ENCODE measurements at regions of chr6 and their contacts with region 1.

Region 1: DNA sequence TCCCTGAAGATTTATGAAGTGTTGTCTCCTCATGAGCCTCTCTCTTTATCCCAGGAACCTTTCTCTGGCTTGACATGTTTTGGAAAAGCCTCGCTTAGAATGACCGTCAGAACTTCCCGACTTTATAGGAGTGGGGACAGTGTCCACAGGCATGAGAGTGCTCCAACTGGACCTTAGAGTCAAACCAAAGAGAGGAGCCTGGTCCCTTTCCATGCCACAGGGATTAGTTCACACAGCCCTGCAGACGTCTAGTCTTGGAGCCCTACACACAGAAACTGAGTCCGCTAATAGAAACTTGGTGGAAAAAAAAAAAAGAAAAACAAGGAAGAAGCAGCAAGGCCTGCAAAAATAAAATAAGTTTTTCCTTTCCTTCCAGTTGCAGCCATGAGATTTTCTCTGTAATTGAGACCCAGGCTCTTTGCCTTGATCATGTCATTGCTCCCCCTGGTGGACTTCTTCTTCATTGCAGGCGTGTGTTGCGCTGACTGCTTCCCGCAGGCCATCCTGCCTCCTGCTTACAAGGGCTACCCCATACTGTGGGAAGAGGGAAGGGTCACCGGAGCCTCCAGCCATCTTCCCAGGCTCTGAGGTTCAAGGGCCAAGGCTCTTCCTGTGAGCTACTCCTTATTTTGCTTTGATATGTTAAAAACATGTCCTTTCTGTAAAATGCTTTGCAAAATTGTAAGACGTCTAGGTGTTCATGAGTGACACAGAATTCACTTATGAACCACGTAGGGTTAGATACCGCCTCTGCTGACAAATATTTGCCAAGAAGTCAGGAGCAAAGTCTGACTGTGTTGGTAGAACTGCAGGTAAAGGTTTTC is 201.0 kb downstream of the UST start:
- DNase-seq: peak; percentile 54
- H3K4me3 Mint-ChIP-seq: no peak overlapping the region
- H3K27ac Mint-ChIP-seq: no peak overlapping the region
- H3K4me1 Mint-ChIP-seq: no peaks in the 10 kb centered on the region
- H3K27me3 Mint-ChIP-seq: peaks cover 21% of the 10 kb centered on the region

Region 2: GRCh38 chr6:148074738-148075137 is 873.1 kb before region 1 on chr6:
- intact Hi-C with region 1: no loop called
- DNase-seq: no peak
- H3K4me3 Mint-ChIP-seq: no peak overlapping the region
- H3K27ac Mint-ChIP-seq: no peak overlapping the region
- H3K4me1 Mint-ChIP-seq: no peaks in the 10 kb centered on the region
- H3K27me3 Mint-ChIP-seq: no peaks in the 10 kb centered on the region

Region 3: DNA sequence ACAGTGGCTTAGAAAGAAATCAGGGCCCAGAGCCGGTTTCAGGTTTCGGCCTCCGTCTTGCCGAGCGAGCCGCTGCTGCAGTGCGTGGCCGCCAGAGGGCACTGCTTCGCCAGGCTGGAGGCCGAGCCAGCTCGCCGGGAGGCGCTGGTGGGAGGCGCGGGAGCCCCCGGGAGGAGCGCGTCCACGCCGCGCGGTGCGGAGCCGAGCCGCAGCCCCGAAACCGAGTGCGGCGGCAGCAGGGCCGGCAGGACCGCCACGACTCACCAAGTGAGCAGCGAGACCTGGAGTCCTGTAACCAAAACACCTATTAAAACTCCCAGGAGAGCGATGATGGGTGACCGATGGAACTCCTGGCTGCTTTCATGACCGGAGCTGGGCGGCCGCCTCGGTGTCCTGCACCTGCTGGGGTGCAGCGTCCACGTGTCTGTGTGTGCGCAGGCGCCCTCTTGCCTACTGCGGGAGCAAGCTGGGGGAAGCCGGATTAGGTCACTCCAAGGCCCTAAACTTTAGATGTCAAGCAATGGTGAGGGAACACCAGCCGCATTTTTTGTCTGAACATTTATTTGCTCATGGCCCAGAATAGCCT is 387.9 kb before region 1 on chr6:
- intact Hi-C with region 1: loop called (anchors 1 kb)
- DNase-seq: peak; percentile 55
- H3K4me3 Mint-ChIP-seq: no peak overlapping the region
- H3K27ac Mint-ChIP-seq: no peak overlapping the region
- H3K4me1 Mint-ChIP-seq: peaks cover 7% of the 10 kb centered on the region
- H3K27me3 Mint-ChIP-seq: peaks cover 14% of the 10 kb centered on the region

Region 4: DNA sequence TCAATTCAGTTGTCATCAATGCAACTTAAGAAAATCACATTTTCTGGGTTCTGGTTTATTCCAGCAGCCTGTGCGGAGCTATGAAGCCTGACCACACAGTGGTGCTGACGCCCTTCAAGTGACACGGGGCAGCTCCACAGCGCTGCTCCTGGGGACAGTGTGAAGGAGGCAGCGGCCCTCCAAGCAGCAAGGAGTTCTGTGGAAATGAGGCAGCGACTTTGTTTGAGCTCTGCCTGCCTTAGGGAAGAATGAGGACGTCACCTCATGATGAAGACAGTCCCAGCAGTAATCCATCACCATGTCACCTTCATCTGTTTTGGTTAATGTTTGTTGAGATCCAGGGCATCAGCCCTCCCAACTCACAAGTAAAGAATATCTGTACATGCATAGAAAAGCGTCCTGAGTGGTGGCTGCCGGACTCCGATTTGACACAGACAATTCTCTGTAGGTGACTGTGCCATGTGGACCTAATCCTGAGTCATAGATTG is 369.5 kb before region 1 on chr6:
- intact Hi-C with region 1: loop called (anchors 1 kb)
- DNase-seq: no peak
- H3K4me3 Mint-ChIP-seq: no peak overlapping the region
- H3K27ac Mint-ChIP-seq: no peak overlapping the region
- H3K4me1 Mint-ChIP-seq: no peaks in the 10 kb centered on the region
- H3K27me3 Mint-ChIP-seq: peaks cover 22% of the 10 kb centered on the region

Region 5: DNA sequence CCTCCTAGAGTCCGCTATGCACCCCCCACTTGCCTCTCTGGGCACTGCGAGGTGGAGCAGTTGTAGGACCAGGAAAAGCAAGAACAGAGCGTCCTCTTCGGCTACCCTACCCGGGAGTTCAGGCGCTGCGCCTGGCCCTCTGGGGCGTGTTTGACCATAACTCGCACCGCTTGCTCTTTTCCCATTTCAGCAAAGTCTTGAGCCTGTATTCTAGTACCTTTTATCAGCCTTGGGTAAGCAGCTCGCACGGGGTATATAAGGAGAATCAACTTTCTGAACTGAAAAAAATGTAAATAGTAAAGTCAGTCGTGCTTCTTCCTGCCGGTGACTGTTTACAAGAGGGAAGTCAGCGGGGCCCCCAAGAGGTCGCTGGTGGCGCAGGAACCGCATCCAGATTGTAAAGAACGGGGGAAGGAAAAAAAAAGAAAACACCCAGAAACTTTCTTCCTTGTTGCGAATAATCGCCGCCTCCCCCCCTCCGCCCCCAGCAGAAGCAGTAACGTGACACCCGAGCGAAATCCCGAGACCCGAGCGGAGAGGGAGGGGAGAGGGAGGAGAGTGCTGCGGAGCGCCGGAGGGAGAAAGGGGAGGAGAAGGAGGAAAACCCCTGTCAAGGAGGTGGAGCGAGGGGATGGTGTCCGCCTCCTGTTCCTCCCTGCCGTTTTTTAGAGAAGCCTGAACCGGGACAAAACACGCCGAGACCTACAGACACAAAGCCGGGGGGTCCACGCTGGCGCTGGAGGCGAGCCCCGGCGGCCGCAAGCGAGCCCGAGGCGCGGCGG is 201.3 kb before region 1 on chr6 and contains the start of gene UST:
- intact Hi-C with region 1: loop called (anchors 1 kb)
- DNase-seq: no peak
- H3K4me3 Mint-ChIP-seq: peak within 1 kb of the TSS; percentile 91
- H3K27ac Mint-ChIP-seq: peak within 1 kb of the TSS; percentile 31
- H3K4me1 Mint-ChIP-seq: peaks cover 23% of the 10 kb centered on the region
- H3K27me3 Mint-ChIP-seq: peaks cover 75% of the 10 kb centered on the region
- total RNA-seq, gene UST: 0.29 and 0.49 TPM in 2 replicates

Region 6: DNA sequence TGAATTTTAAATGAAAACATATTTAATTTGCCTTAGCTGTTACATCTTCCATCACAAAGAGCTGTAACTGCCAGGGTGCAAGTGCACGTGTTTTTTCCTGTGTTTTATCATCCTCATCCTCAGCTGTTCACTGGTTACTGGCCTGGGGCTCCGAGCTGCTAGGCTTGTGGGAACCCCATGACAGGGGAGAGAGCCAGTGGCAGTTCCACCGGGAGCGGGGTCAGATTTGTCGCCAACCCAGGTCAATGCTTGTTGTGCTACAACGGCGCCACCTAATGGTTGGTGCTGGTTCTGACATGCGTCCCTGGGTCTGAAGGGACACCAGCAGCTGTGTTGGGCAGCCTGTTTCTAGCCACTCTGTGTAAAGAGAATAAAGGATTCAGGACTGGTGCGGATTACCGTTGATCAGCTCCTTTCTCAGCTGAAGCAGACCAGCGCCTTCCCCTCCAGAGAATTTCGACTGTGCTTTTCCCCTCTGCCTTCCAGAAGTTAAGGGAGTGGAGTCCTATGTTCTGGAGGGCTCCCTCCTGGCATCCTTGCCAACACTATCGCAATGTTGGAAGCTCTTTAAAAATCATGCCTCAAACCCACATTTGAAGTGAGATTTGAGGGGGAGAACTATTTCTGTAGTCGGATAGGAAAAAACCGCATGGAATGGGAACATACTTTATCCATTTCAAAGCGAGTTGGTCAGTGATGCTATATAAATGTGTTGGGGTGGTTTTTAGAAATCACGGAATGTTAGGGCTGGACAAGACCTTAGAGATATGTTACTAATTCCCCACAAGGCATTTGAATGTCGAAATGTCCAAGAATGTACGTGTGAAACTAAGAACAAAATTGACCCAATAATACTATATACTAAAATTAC is 484.3 kb after region 1 on chr6:
- intact Hi-C with region 1: loop called (anchors 2 kb)
- DNase-seq: peak; percentile 79
- H3K4me3 Mint-ChIP-seq: peak overlapping the region; percentile 48
- H3K27ac Mint-ChIP-seq: peak overlapping the region; percentile 79
- H3K4me1 Mint-ChIP-seq: peaks cover 23% of the 10 kb centered on the region
- H3K27me3 Mint-ChIP-seq: no peaks in the 10 kb centered on the region

Region 7: DNA sequence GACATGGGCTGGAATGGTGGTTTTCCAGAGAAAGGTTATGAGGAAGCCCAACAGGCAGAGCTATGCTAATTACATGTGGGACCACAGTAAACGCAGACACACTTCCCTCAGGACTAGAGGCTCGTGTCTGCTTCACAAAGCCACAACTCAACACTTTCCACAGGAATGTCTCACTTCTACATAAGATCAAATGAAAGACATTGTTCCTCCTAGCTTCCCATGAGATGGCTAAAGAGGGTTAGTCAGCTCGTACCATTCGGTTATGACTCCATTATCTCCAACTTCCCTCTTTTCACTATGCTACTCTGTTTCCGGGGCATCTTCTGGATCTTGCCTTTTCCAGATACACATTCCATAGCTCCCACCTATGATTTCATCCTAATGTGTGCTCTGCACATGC is 566.1 kb after region 1 on chr6:
- intact Hi-C with region 1: loop called (anchors 5 kb)
- DNase-seq: no peak
- H3K4me3 Mint-ChIP-seq: no peak overlapping the region
- H3K27ac Mint-ChIP-seq: no peak overlapping the region
- H3K4me1 Mint-ChIP-seq: peaks cover 47% of the 10 kb centered on the region
- H3K27me3 Mint-ChIP-seq: no peaks in the 10 kb centered on the region

Measured in activated T-helper 1 cell treated with anti-CD3 and anti-CD28 coated beads, Interleukin-12 subunit alpha, Interleukin-12 subunit beta, Interleukin-2, Interleukin-4 antibody, amounts not matched to agents 30 ng/mL and 10 ng/mL and 1 ng/mL, durations not matched to agents 14 hours and 24 hours and 36 hours (primary cell).